Calu3 (cell line): ENCODE measurements at regions of chrX and their contacts with region 1.

Region 1: DNA sequence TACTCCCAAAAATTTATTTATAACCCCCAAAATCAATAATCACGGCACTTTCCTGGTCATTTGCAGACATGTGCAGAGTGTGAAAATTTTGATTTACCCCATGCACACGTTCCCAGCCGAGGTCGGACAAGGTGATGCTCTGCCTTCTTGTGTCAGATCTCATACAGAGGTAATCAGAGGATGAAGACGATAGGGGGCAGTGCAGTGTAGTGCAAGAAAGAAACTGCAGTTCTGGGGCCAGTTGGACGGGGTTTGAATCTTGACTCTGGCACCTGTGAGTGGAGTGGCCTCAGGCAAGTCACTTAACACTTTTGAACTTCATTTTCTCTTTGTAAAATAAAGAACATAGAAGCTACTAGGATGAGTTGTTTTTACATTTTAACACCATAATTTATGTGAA is 88.4 kb downstream of the FRMPD3 start:
- DNase-seq: peak; percentile 63
- H3K4me3 Mint-ChIP-seq: no peak overlapping the region
- H3K27ac Mint-ChIP-seq: no peak overlapping the region
- H3K4me1 Mint-ChIP-seq: no peaks in the 10 kb centered on the region
- H3K27me3 Mint-ChIP-seq: peaks cover 22% of the 10 kb centered on the region
- CTCF ChIP-seq: no peak

Region 2: DNA sequence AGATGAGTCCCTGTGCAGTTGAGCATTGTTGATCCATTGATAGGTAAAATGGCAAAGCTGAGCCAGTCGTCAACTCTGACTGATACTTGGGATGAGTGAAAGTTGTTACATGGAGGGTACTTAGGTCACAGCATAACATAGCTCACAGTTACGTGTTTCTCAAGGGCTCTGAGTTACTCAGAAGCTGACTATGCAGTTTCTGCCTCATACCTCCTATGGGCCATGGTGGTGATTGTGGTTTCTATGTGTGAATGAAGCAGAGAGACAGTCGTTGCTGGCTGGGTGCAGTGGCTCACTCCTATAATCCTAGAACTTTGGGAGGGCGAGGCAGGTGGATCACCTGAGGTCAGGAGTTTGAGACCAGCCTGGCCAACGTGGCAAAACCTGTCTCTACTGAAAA is 57.5 kb before region 1 on chrX:
- CTCF ChIA-PET with region 1: no interaction called
- intact Hi-C with region 1: no loop called
- DNase-seq: no peak
- H3K4me3 Mint-ChIP-seq: no peak overlapping the region
- H3K27ac Mint-ChIP-seq: no peak overlapping the region
- H3K4me1 Mint-ChIP-seq: no peaks in the 10 kb centered on the region
- H3K27me3 Mint-ChIP-seq: peaks cover 34% of the 10 kb centered on the region
- CTCF ChIP-seq: no peak

Region 3: DNA sequence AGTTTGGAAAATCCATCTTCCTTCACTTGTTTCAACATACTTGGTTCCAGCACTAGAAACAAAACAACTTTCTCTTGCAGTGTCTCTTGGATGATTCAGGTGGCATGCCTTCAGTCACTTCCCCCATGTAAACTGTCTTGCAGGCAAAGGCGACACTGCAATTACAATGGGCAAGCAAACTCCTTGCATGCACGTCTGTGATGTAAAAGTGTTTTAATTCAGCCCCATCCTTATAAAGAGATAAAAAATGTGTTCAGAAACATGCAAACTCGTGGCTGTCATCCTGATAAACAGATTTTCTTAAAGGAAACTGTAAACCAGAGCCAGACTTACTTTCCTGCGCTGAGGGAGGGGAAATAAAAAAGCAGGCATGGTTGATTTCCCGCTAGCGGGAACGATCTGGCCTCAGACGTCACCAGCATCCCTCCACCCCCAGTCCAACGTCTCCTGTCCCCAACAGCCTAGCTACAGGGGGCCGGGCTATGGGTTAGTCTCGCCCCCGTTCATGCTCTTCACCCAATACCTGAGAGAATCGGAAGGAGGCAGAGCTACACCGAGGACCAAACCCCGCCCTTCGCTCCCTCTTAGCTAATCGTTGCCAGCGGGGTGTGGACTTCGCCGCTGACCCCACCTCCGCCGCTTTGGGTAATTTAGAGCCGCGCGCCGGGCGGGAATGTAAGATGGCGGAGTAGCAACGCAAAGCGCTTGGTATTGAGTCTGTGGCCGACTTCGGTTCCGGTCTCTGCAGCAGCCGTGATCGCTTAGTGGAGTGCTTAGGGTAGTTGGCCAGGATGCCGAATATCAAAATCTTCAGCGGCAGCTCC is 90.2 kb after region 1 on chrX and contains the start of gene PRPS1:
- CTCF ChIA-PET with region 1: interaction called, 5 read pairs
- intact Hi-C with region 1: loop called (anchors 1 kb)
- DNase-seq: peak; percentile 90
- H3K4me3 Mint-ChIP-seq: peak within 1 kb of the TSS; percentile 86
- H3K27ac Mint-ChIP-seq: peak within 1 kb of the TSS; percentile 78
- H3K4me1 Mint-ChIP-seq: peaks cover 10% of the 10 kb centered on the region
- H3K27me3 Mint-ChIP-seq: no peaks in the 10 kb centered on the region
- CTCF ChIP-seq: no peak
- total RNA-seq, gene PRPS1: 62.5 and 72.5 TPM in 2 replicates

Region 4: GRCh38 chrX:107894038-107894437 is 356.2 kb after region 1 on chrX:
- CTCF ChIA-PET with region 1: no interaction called
- intact Hi-C with region 1: loop called (anchors 2 kb)
- DNase-seq: peak; percentile 42
- H3K4me3 Mint-ChIP-seq: no peak overlapping the region
- H3K27ac Mint-ChIP-seq: no peak overlapping the region
- H3K4me1 Mint-ChIP-seq: no peaks in the 10 kb centered on the region
- H3K27me3 Mint-ChIP-seq: no peaks in the 10 kb centered on the region
- CTCF ChIP-seq: peak; percentile 42